CD4-positive, alpha-beta memory T cell (primary cell): ENCODE measurements at regions of chr17 and their contacts with region 1.

Region 1: GRCh38 chr17:8118769-8119580 is 661 bp upstream of the ALOXE3 start:
- DNase-seq: peak; percentile 87 to 91 (median 88)
- H3K4me3 ChIP-seq: peak overlapping the region; percentile 69 to 97
- H3K4me3 Mint-ChIP-seq: peak overlapping the region; percentile 91 to 97 (median 94)
- H3K27ac ChIP-seq: peak overlapping the region; percentile 56
- H3K27ac Mint-ChIP-seq: peak overlapping the region; percentile 95 to 100 (median 98)
- H3K4me1 ChIP-seq: peaks cover 52% of the 10 kb centered on the region
- H3K4me1 Mint-ChIP-seq: peaks cover 34 to 63% (median 48%) of the 10 kb centered on the region in 4 donors
- H3K27me3 ChIP-seq: peaks cover 42% of the 10 kb centered on the region
- H3K27me3 Mint-ChIP-seq: peaks cover 27 to 59% of the 10 kb centered on the region in 2 donors

Region 2: GRCh38 chr17:8073627-8074484 is 45.1 kb before region 1 on chr17:
- CTCF ChIA-PET with region 1: interaction called, 29 read pairs
- POLR2A ChIA-PET with region 1: interaction called, 11 read pairs
- intact Hi-C with region 1: loop called (anchors 1 kb)
- DNase-seq: peak; percentile 77 to 88 (median 82)
- H3K4me3 ChIP-seq: peak overlapping the region in 1 of 2 donors; percentile 33
- H3K4me3 Mint-ChIP-seq: peak overlapping the region; percentile 74 to 97 (median 86)
- H3K27ac ChIP-seq: no peak overlapping the region
- H3K27ac Mint-ChIP-seq: peak overlapping the region in 6 of 7 donors; percentile 37 to 92 (median 82)
- H3K4me1 ChIP-seq: peaks cover 27% of the 10 kb centered on the region
- H3K4me1 Mint-ChIP-seq: peaks cover 15 to 29% (median 23%) of the 10 kb centered on the region in 4 donors
- H3K27me3 ChIP-seq: peaks cover 24% of the 10 kb centered on the region
- H3K27me3 Mint-ChIP-seq: peaks cover 12 to 18% of the 10 kb centered on the region in 2 donors

Region 3: GRCh38 chr17:8103549-8103948 is 15.4 kb before region 1 on chr17:
- CTCF ChIA-PET with region 1: interaction called, 81 read pairs
- POLR2A ChIA-PET with region 1: interaction called, 30 read pairs
- intact Hi-C with region 1: no loop called
- DNase-seq: no peak
- H3K4me3 ChIP-seq: no peak overlapping the region
- H3K4me3 Mint-ChIP-seq: no peak overlapping the region
- H3K27ac ChIP-seq: no peak overlapping the region
- H3K27ac Mint-ChIP-seq: no peak overlapping the region
- H3K4me1 ChIP-seq: no peaks in the 10 kb centered on the region
- H3K4me1 Mint-ChIP-seq: peaks cover 0 to 1% (median 0%) of the 10 kb centered on the region in 4 donors
- H3K27me3 ChIP-seq: no peaks in the 10 kb centered on the region
- H3K27me3 Mint-ChIP-seq: no peaks in the 10 kb centered on the region

Region 4: DNA sequence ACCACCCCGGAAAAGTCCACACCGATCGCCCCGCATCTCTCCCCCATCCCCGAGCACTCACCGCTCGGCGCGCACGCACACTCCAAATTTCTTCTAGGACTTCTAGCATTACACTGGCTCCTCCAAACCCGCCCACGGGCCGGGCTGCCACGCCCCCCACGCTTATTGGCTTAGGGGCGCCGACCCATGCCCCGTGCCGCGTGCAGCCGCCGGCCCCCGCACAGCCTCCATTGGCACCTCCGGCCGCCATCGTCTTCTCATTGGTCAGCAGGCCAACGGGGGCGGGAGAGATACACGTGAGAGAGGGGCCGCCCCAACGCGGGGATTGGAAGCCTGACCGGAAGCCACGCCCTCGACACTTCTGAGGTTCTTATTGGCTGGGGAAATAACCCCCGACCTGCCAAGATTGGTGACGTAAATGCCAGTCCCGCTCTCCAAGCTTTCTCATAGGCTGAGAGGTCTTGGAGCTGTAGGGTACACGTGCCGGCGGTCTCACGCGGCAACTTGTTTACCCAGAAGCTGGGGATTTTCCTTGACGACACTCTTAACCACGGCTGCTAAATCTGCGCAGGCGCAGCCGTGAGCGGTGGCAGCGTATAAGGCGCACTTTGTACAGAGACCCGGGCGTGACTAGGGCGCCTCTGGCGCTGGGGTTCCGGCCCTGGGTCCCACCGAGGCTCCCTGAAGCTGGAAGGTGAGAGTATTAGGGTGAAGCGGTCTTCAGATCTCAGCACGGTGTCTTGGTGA is 37.4 kb after region 1 on chr17:
- CTCF ChIA-PET with region 1: interaction called, 38 read pairs
- POLR2A ChIA-PET with region 1: interaction called, 83 read pairs
- intact Hi-C with region 1: loop called (anchors 1 kb)
- DNase-seq: peak; percentile 100
- H3K4me3 ChIP-seq: peak overlapping the region; percentile 90
- H3K4me3 Mint-ChIP-seq: no peak overlapping the region
- H3K27ac ChIP-seq: peak overlapping the region; percentile 100
- H3K27ac Mint-ChIP-seq: no peak overlapping the region
- H3K4me1 ChIP-seq: peaks cover 85% of the 10 kb centered on the region
- H3K4me1 Mint-ChIP-seq: peaks cover 38 to 71% (median 55%) of the 10 kb centered on the region in 4 donors
- H3K27me3 ChIP-seq: no peaks in the 10 kb centered on the region
- H3K27me3 Mint-ChIP-seq: no peaks in the 10 kb centered on the region

Region 5: DNA sequence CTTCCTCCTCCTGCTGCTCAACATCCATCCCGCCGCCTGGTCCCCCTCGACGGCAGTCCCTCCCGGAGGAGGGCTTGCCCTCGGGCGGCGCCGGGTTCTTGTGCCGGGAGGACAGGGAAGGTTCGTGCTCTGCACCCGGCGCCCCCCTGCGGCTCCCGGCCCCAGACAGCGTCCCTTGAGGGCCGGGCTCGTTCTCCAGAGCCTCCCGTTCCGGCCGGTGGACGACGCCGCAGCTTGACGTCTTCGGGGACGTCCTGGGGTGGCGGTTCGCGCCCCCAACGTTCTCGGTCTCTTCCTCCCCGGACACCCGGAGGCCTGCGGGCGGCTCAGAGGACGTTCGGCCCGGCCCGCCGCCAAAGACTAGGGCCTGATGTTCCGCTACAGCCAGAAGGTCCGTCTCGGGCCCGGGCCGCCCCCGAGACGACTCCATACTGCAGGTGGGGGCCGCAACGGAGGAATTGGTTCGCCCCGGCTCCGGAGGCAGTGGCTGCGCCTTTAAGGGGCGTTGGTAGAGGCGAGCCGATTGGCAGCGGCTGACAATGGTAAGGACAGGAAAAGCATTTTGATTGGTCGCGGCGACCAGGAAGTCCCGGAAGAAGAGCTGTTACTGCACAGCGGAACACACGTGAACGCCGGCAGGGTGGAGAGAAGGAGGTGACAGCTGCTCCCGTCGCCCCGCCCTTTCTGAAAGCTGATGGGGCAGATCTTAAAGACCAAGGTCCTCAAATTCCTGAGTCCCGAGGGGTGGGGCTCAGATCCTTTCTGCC is 70.9 kb after region 1 on chr17 and contains the start of gene BORCS6:
- CTCF ChIA-PET with region 1: interaction called, 49 read pairs
- POLR2A ChIA-PET with region 1: interaction called, 132 read pairs
- intact Hi-C with region 1: loop called (anchors 1 kb)
- DNase-seq: peak; percentile 93 to 98 (median 96)
- H3K4me3 ChIP-seq: peak within 1 kb of the TSS; percentile 76 to 100
- H3K4me3 Mint-ChIP-seq: peak within 1 kb of the TSS in 5 of 8 donors; percentile 13 to 92 (median 41)
- H3K27ac ChIP-seq: peak within 1 kb of the TSS; percentile 82
- H3K27ac Mint-ChIP-seq: peak within 1 kb of the TSS in 5 of 7 donors; percentile 78 to 94 (median 91)
- H3K4me1 ChIP-seq: peaks cover 44% of the 10 kb centered on the region
- H3K4me1 Mint-ChIP-seq: peaks cover 7 to 15% (median 13%) of the 10 kb centered on the region in 4 donors
- H3K27me3 ChIP-seq: no peaks in the 10 kb centered on the region
- H3K27me3 Mint-ChIP-seq: no peaks in the 10 kb centered on the region
- total RNA-seq, gene BORCS6: 19.2 to 19.4 TPM

Region 6: DNA sequence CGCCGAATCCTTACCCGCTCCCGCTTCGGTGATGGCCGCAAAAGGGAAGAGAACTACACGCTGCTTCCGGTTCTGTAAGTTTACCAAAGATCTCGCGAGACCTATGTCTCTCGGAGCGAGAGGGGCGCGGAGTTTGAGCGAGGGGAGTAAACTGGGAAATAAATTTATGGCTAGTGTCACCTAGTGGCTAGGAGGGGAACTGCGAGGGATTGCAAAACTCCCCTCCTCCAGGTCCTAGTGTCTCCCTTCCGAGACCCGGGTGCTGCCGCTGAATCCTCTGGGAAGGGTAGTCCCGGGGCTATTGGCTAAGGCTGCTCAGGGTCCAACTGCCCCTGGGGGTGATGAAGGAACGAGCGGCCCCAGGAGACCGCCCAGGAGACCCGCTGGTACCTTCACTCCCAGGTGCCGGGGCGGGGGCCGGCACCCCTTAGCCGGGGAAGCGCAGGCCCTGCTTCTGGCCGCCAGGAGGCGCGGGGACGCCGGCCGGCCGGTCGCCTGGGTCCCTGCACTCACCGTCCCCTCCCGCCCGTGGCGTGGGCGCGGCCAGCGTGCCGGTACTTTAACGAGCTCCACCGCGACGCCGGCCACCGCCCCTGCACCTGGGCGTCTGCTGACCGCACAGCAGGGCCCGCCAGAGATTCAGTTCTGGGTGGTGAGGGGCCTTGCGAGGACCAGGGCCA is 264.3 kb after region 1 on chr17 and contains the start of gene RPL26:
- CTCF ChIA-PET with region 1: no interaction called
- POLR2A ChIA-PET with region 1: no interaction called
- intact Hi-C with region 1: loop called (anchors 2 kb)
- DNase-seq: peak; percentile 96 to 98 (median 97)
- H3K4me3 ChIP-seq: peak within 1 kb of the TSS; percentile 74 to 95
- H3K4me3 Mint-ChIP-seq: peak within 1 kb of the TSS; percentile 95 to 99 (median 97)
- H3K27ac ChIP-seq: peak within 1 kb of the TSS; percentile 77
- H3K27ac Mint-ChIP-seq: peak within 1 kb of the TSS; percentile 94 to 97 (median 96)
- H3K4me1 ChIP-seq: peaks cover 49% of the 10 kb centered on the region
- H3K4me1 Mint-ChIP-seq: peaks cover 36 to 82% (median 54%) of the 10 kb centered on the region in 4 donors
- H3K27me3 ChIP-seq: no peaks in the 10 kb centered on the region
- H3K27me3 Mint-ChIP-seq: no peaks in the 10 kb centered on the region
- total RNA-seq, gene RPL26: 2,761 to 2,878 TPM